Heart left ventricle (tissue), 16 donors: ENCODE measurements at regions of chr17 and their contacts with region 1.

Region 1: GRCh38 chr17:47776330-47777197 is 43.5 kb downstream of the TBX21 start:
- DNase-seq: no peak
- ATAC-seq: peak in 1 of 4 donors; percentile 60
- H3K4me3 ChIP-seq: no peak overlapping the region
- H3K27ac ChIP-seq: no peak overlapping the region
- H3K4me1 ChIP-seq: peaks cover 0 to 4% (median 0%) of the 10 kb centered on the region in 12 donors
- H3K27me3 ChIP-seq: peaks cover 15 to 69% (median 30%) of the 10 kb centered on the region in 9 donors
- CTCF ChIP-seq: peak; percentile 43 to 65 (median 58)
- POLR2A ChIP-seq: no peak

Region 2: GRCh38 chr17:47725446-47726111 is 51.0 kb before region 1 on chr17:
- intact Hi-C with region 1: no loop called
- DNase-seq: peak in 2 of 5 donors; percentile 3 to 14
- ATAC-seq: no peak
- H3K4me3 ChIP-seq: no peak overlapping the region
- H3K27ac ChIP-seq: no peak overlapping the region
- H3K4me1 ChIP-seq: peaks cover 0 to 14% (median 0%) of the 10 kb centered on the region in 12 donors
- H3K27me3 ChIP-seq: peaks cover 10 to 82% (median 26%) of the 10 kb centered on the region in 9 donors
- CTCF ChIP-seq: no peak
- POLR2A ChIP-seq: no peak

Region 3: GRCh38 chr17:47889734-47890529 is 113.4 kb after region 1 on chr17:
- intact Hi-C with region 1: loop called in 1 of 10 experiments (anchors 2 kb)
- DNase-seq: peak; percentile 84 to 92 (median 87)
- ATAC-seq: peak; percentile 74 to 93 (median 92)
- H3K4me3 ChIP-seq: no peak overlapping the region
- H3K27ac ChIP-seq: no peak overlapping the region
- H3K4me1 ChIP-seq: peaks cover 0 to 16% (median 8%) of the 10 kb centered on the region in 12 donors
- H3K27me3 ChIP-seq: no peaks in the 10 kb centered on the region
- CTCF ChIP-seq: peak; percentile 89 to 99 (median 96)
- POLR2A ChIP-seq: no peak